GM12878 (cell line): ENCODE measurements at regions of chr11 and their contacts with region 1.

Region 1: DNA sequence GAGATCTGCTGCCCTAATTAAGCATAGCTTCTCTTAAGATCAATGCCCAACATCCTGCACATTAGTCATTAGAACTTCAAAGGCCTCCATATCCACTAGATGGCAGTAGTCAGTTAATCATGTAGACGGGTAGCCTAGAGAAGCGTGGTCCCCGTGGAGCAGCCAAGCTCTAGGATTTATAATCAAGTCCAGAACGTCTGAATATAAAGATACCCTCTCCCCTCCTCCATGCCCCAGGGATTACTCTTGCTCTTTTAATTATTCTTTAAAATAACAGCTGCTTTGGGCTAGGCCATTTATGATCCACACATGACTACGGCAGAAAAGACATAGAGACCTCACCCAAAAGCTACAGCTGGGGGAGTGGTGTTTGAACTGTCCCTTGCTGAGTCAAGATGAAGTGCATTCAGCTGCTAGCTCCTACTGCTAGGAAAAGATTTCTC is 327.6 kb upstream of the PLET1 start:
- DNase-seq: peak; percentile 40
- ATAC-seq: peak; percentile 78
- H3K4me3 ChIP-seq: no peak overlapping the region
- H3K27ac ChIP-seq: no peak overlapping the region
- H3K4me1 ChIP-seq: peaks cover 16% of the 10 kb centered on the region
- H3K27me3 ChIP-seq: no peaks in the 10 kb centered on the region; a peak in 1 of 4 replicates
- CTCF ChIP-seq: peak; percentile 53 to 79 (median 62)
- EP300 ChIP-seq: no peak
- POLR2A ChIP-seq: no peak
- RAD21 ChIP-seq: peak; percentile 95

Region 2: GRCh38 chr11:111230122-111230465 is 1358.2 kb before region 1 on chr11:
- CTCF ChIA-PET with region 1: no interaction called
- POLR2A ChIA-PET with region 1: no interaction called
- RAD21 ChIA-PET with region 1: no interaction called
- SMC1A ChIA-PET with region 1: no interaction called
- in situ Hi-C with region 1: no loop called
- intact Hi-C with region 1: no loop called
- DNase-seq: no peak
- ATAC-seq: peak; percentile 62
- H3K4me3 ChIP-seq: no peak overlapping the region
- H3K27ac ChIP-seq: no peak overlapping the region
- H3K4me1 ChIP-seq: peaks cover 10% of the 10 kb centered on the region
- H3K27me3 ChIP-seq: peaks cover 0 to 3% of the 10 kb centered on the region in 2 experiments; a peak in 1 of 4 replicates
- CTCF ChIP-seq: no peak
- EP300 ChIP-seq: no peak
- POLR2A ChIP-seq: no peak
- RAD21 ChIP-seq: no peak

Region 3: DNA sequence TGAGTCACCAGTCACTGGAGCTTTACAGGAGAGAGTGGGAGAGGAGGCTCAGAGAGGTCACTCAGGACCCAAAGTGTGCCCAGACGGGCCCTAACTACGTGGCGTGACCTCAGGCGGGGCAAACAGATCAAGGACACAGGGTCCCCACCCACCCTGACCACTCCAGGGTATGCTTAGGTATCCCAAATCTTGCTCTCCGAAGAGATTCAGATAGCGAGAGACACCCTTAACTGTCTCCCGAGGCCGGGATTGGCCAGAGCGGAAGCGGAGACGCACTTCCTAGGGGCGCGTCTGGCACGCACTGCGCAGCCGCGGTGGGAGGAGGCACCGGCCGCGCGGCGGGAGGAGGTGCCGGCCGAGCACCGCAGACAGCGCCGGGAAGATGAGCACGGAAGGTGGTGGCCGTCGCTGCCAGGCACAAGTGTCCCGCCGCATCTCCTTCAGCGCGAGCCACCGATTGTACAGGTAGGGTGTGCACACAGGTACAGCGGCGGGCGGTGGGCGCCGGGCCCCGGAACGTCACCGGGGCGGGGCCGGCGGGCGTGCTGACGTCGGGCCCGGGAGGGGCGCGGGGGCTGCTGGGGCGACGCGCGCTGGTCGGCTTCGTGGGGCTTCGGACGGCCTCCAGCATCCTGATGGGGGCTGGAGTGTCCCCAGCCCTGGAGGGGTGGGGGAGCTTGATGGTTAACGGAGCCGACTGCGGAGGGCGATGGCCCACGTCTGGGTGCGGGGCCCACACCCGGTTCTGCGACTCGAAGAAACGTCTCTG is 362.0 kb before region 1 on chr11 and contains the start of gene PTS:
- CTCF ChIA-PET with region 1: interaction called, 4 read pairs
- POLR2A ChIA-PET with region 1: no interaction called
- RAD21 ChIA-PET with region 1: no interaction called
- SMC1A ChIA-PET with region 1: interaction called, 4 read pairs
- in situ Hi-C with region 1: loop called (anchors 5 kb)
- intact Hi-C with region 1: no loop called
- DNase-seq: peak; percentile 64
- ATAC-seq: peak; percentile 96
- H3K4me3 ChIP-seq: peak within 1 kb of the TSS; percentile 98
- H3K27ac ChIP-seq: peak within 1 kb of the TSS; percentile 95
- H3K4me1 ChIP-seq: peaks cover 7% of the 10 kb centered on the region
- H3K27me3 ChIP-seq: no peaks in the 10 kb centered on the region
- CTCF ChIP-seq: no peak
- EP300 ChIP-seq: no peak; a peak in 1 of 4 replicates
- POLR2A ChIP-seq: peak; percentile 99
- RAD21 ChIP-seq: no peak
- polyA plus RNA-seq, gene PTS: 45.0 to 47.6 TPM

Region 4: DNA sequence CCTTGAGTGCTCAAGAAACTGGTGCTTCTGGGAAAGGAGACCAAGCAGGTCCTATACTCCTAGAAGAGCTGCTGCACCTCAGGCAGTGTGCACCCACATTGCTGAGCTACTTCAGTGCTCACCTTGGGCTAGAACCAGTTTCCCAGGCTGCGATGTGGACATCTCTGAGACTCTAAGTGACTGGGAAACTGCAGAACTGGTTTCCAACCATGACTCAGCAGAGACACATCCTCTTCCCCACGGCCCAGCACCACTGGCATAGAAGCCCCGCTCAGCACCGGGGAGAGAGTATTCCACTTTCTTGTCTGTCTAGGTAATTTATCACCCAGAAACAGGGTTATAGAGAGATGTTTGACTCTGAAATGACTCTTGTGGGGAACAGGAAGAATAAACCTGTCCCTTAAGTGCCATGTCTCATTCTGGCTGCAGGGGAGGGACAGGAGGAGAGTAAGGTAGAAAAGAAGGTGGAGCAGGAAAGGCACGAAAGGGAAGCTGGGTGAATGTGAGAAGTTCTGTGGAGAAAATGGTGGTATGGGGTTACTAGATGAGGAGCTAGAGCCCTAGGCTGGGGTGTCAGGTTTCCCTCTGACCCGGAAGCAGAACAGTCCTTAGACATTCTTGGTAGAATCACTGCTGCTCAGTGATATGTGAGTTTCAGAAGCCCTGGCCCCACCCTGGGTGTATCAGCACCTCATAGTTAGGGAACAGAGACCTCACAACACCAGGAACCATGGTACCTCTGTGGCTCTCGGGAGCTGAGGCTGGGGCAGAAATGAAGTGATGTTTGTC is 32.5 kb after region 1 on chr11:
- CTCF ChIA-PET with region 1: interaction called, 15 read pairs
- POLR2A ChIA-PET with region 1: no interaction called
- RAD21 ChIA-PET with region 1: interaction called, 9 read pairs
- SMC1A ChIA-PET with region 1: interaction called, 24 read pairs
- in situ Hi-C with region 1: no loop called
- intact Hi-C with region 1: no loop called
- DNase-seq: peak; percentile 37
- ATAC-seq: peak; percentile 44
- H3K4me3 ChIP-seq: no peak overlapping the region
- H3K27ac ChIP-seq: peak overlapping the region; percentile 50
- H3K4me1 ChIP-seq: peaks cover 27% of the 10 kb centered on the region
- H3K27me3 ChIP-seq: no peaks in the 10 kb centered on the region
- CTCF ChIP-seq: no peak
- EP300 ChIP-seq: no peak
- POLR2A ChIP-seq: no peak
- RAD21 ChIP-seq: no peak

Region 5: GRCh38 chr11:112650527-112650926 is 62.3 kb after region 1 on chr11:
- CTCF ChIA-PET with region 1: interaction called, 9 read pairs
- POLR2A ChIA-PET with region 1: no interaction called
- RAD21 ChIA-PET with region 1: interaction called, 6 read pairs
- SMC1A ChIA-PET with region 1: interaction called, 17 read pairs
- in situ Hi-C with region 1: no loop called
- intact Hi-C with region 1: no loop called
- DNase-seq: no peak
- ATAC-seq: no peak
- H3K4me3 ChIP-seq: no peak overlapping the region
- H3K27ac ChIP-seq: no peak overlapping the region
- H3K4me1 ChIP-seq: no peaks in the 10 kb centered on the region
- H3K27me3 ChIP-seq: no peaks in the 10 kb centered on the region
- CTCF ChIP-seq: no peak
- EP300 ChIP-seq: no peak
- POLR2A ChIP-seq: no peak
- RAD21 ChIP-seq: no peak

Region 6: GRCh38 chr11:112784323-112785073 is 196.2 kb after region 1 on chr11:
- CTCF ChIA-PET with region 1: interaction called, 46 read pairs
- POLR2A ChIA-PET with region 1: no interaction called
- RAD21 ChIA-PET with region 1: interaction called, 10 read pairs
- SMC1A ChIA-PET with region 1: interaction called, 8 read pairs
- in situ Hi-C with region 1: no loop called
- intact Hi-C with region 1: no loop called
- DNase-seq: no peak
- ATAC-seq: no peak
- H3K4me3 ChIP-seq: no peak overlapping the region
- H3K27ac ChIP-seq: no peak overlapping the region
- H3K4me1 ChIP-seq: no peaks in the 10 kb centered on the region
- H3K27me3 ChIP-seq: no peaks in the 10 kb centered on the region; a peak in 1 of 4 replicates
- CTCF ChIP-seq: no peak
- EP300 ChIP-seq: no peak
- POLR2A ChIP-seq: no peak
- RAD21 ChIP-seq: no peak

Region 7: DNA sequence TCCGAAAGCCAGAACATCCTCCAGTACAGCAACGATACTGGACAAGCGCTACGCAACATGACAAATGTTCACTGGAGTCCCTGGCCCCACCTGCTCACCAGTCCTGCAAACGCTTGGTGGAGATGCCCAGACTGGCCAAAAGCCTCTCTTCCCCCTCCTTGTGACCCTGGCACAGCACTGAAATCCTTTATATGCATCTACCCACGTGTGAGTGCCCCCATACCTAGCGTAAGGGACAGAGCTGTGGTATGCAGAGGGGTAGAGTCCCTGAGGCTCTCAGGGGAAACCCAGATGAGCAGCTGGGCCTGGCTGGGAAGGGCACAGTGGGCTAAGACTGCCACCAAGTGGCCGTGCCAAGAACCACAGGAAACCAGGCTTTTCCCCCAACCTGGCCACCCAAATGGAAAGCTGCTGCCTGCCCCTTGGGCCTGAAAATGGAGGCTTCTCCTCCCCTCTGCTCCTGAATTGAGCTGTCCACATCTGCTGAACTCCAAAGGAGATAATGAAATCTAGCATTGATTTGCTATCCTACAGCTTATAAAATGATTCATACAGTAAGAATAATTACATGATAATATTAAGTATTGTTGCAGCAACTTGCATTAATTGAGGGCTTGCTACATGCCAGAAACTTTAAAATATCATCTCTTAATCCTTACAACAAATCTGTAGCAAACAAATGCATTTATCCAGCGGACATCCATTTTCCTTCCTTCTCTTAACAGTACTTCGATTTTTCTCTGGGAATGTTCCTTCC is 701.3 kb after region 1 on chr11:
- CTCF ChIA-PET with region 1: interaction called, 66 read pairs
- POLR2A ChIA-PET with region 1: no interaction called
- RAD21 ChIA-PET with region 1: interaction called, 34 read pairs
- SMC1A ChIA-PET with region 1: interaction called, 33 read pairs
- in situ Hi-C with region 1: loop called (anchors 5 kb)
- intact Hi-C with region 1: loop called (anchors 1 kb)
- DNase-seq: peak; percentile 33
- ATAC-seq: peak; percentile 99
- H3K4me3 ChIP-seq: no peak overlapping the region
- H3K27ac ChIP-seq: no peak overlapping the region
- H3K4me1 ChIP-seq: no peaks in the 10 kb centered on the region
- H3K27me3 ChIP-seq: 0 out of 4 replicates have a peak, but pooled peaks cover 0 to 2% of the 10 kb centered on the region in 2 experiments
- CTCF ChIP-seq: peak; percentile 89 to 98 (median 97)
- EP300 ChIP-seq: no peak
- POLR2A ChIP-seq: no peak
- RAD21 ChIP-seq: peak; percentile 96